HepG2 (cell line): ENCODE measurements at regions of chr3 and their contacts with region 1.

Region 1: GRCh38 chr3:17841190-17841828 is 98.9 kb upstream of the TBC1D5 start:
- DNase-seq: peak; percentile 57
- ATAC-seq: peak; percentile 99
- H3K4me3 ChIP-seq: no peak overlapping the region
- H3K27ac ChIP-seq: no peak overlapping the region
- H3K4me1 ChIP-seq: no peaks in the 10 kb centered on the region
- H3K27me3 ChIP-seq: no peaks in the 10 kb centered on the region
- CTCF ChIP-seq: peak; percentile 96
- EP300 ChIP-seq: no peak
- POLR2A ChIP-seq: no peak
- RAD21 ChIP-seq: peak; percentile 90

Region 2: GRCh38 chr3:16589867-16590624 is 1251.3 kb before region 1 on chr3:
- CTCF ChIA-PET with region 1: no interaction called
- POLR2A ChIA-PET with region 1: no interaction called
- in situ Hi-C with region 1: loop called (anchors 25 kb)
- intact Hi-C with region 1: no loop called
- DNase-seq: no peak
- ATAC-seq: no peak
- H3K4me3 ChIP-seq: no peak overlapping the region
- H3K27ac ChIP-seq: no peak overlapping the region
- H3K4me1 ChIP-seq: no peaks in the 10 kb centered on the region
- H3K27me3 ChIP-seq: no peaks in the 10 kb centered on the region
- CTCF ChIP-seq: no peak
- EP300 ChIP-seq: no peak
- POLR2A ChIP-seq: no peak
- RAD21 ChIP-seq: no peak

Region 3: DNA sequence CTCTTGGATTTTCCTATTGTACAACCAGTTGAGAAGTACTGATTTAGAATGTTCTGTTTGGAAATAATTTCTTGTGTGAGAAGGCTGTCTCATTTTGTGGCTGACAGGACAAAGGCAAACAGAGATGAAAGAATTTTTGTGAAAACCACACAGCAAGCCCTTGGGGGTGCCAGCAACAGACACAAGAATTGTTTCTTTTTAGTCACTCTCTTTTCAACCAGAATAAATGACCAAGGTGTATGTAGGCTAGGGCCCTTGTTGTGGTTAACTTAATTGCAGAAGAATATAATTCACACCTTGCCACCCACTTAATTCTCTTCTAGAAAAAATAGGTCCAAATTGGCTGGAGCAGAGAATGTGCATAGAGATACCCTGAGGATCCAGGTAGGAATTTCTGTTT is 230.5 kb after region 1 on chr3:
- CTCF ChIA-PET with region 1: no interaction called
- POLR2A ChIA-PET with region 1: no interaction called
- in situ Hi-C with region 1: no loop called
- intact Hi-C with region 1: no loop called
- DNase-seq: no peak
- ATAC-seq: no peak
- H3K4me3 ChIP-seq: no peak overlapping the region
- H3K27ac ChIP-seq: no peak overlapping the region
- H3K4me1 ChIP-seq: no peaks in the 10 kb centered on the region
- H3K27me3 ChIP-seq: no peaks in the 10 kb centered on the region
- CTCF ChIP-seq: no peak
- EP300 ChIP-seq: no peak
- POLR2A ChIP-seq: no peak
- RAD21 ChIP-seq: no peak